HEK293 (cell line): ENCODE measurements at regions of chr11 and their contacts with region 1.

Region 1: DNA sequence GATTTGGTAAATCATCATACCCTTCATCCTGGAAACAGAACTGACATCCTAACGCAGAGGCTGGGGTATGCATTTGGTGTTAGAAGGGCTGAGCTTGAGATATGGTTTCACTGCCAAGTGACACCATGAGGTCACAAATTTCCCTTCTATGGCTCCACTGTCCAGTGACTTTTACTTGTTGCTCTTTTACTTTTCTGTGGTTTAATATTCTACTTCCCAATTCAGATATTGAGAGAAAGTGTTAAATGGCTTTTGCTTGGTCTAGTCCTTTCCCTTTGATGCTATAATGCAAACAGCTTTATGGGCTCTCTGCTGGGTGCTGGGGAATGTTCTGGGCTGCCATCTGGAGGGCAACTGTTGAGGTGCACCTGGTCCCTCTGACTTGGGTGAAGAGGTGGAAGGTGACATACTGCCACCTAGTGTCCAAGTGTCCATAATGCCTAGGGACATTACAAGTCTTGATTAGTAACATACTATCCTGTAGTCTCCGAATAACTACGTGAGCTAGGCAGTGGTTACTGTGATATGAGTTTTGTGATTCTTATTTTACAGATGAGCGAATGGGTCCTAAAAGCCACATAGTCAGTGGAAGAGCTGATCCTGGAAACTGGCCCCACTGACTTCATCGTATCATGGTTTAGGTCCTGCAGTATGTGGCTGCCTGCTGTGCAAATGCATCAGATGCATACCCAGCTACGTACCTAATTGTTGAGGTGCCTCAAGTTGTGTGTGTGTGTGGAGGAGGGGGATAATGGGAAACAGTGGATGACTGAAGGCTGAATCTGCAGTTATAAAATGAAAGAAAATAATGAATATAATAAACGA is 149.1 kb upstream of the RAG2 start:
- H3K4me3 ChIP-seq: no peak overlapping the region
- H3K27ac ChIP-seq: no peak overlapping the region
- H3K4me1 ChIP-seq: no peaks in the 10 kb centered on the region
- CTCF ChIP-seq: peak; percentile 93

Region 2: GRCh38 chr11:36455658-36456111 is 291.4 kb before region 1 on chr11:
- CTCF ChIA-PET with region 1: no interaction called
- POLR2A ChIA-PET with region 1: no interaction called
- H3K4me3 ChIP-seq: no peak overlapping the region
- H3K27ac ChIP-seq: peak overlapping the region; percentile 74
- H3K4me1 ChIP-seq: peaks cover 5% of the 10 kb centered on the region; the same call in 1 of the 2 replicates
- CTCF ChIP-seq: no peak

Region 3: DNA sequence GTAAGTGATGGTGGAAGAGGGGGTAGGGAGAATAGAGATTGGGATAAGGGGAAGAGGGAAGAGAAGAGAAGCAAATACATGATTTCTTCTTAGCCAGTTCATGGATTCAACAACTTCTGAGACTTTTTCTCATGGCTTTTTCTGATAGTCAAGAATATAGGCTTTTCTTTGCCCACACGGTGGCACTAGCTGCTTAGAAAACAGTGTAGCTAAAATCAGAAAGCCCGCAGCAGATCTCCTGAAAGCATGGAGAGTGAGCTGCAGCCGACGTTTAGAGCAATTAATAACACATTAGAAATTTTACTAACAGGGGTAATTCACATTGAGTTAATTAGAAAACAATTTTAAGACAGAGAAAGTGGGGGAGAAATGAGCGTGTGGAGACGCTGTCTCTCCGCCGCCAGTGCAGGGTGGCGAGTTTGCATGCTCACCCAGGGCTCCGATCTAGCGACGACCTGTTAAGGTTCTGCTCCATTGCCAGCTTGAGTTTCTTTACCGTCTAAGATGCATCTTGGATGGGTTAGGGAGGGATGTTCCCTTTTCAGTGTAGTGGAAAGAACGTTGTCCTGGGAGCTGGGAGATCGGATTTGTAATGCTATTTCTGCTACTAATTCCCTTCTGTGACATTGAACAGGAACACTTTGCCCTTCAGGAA is 182.6 kb before region 1 on chr11:
- CTCF ChIA-PET with region 1: interaction called, 284 read pairs
- POLR2A ChIA-PET with region 1: no interaction called
- H3K4me3 ChIP-seq: peak overlapping the region; percentile 21; the same call in 1 of the 2 replicates
- H3K27ac ChIP-seq: no peak overlapping the region
- H3K4me1 ChIP-seq: no peaks in the 10 kb centered on the region
- CTCF ChIP-seq: peak; percentile 32

Region 4: GRCh38 chr11:36622431-36623136 is 124.5 kb before region 1 on chr11:
- CTCF ChIA-PET with region 1: interaction called, 15 read pairs
- POLR2A ChIA-PET with region 1: interaction called, 3 read pairs
- H3K4me3 ChIP-seq: no peak overlapping the region
- H3K27ac ChIP-seq: no peak overlapping the region
- H3K4me1 ChIP-seq: no peaks in the 10 kb centered on the region; the same call in 1 of the 2 replicates
- CTCF ChIP-seq: no peak

Region 5: GRCh38 chr11:36684840-36685801 is 62.0 kb before region 1 on chr11:
- CTCF ChIA-PET with region 1: interaction called, 48 read pairs
- POLR2A ChIA-PET with region 1: no interaction called
- H3K4me3 ChIP-seq: no peak overlapping the region
- H3K27ac ChIP-seq: no peak overlapping the region
- H3K4me1 ChIP-seq: no peaks in the 10 kb centered on the region
- CTCF ChIP-seq: no peak

Region 6: DNA sequence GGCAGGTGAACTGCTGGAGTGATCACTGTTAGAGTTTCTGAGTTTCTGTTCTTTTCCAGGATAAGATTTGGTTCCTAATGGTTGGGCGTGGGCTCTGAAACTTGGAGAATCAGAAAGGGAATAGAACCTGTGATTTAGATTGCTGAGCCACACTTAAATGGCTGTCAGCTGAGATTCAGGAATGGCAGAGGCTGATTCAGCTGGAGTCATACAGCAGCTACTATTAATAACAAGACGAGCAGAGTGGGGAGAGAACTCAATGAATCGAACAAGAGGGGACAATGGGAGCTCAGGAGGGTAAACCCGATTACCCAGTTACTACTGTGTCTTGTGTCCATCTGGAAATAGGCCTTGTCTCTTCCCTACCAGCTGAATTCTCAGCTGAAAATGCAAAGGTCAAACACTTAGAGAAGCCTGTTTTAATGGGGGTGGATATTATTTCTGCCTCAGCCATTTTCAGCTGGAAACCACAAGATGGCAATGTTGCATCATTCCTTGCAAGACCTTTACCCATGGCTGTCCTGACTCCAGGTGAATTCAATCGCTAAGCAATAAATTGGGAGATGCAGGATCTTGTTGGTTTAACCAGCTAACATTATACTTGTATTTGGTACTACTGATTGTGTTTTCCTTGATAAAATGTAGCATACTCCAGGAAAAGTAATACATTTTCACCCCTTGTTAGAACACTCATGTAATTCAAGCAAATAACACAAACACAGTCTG is 44.6 kb before region 1 on chr11:
- CTCF ChIA-PET with region 1: interaction called, 261 read pairs
- POLR2A ChIA-PET with region 1: no interaction called
- H3K4me3 ChIP-seq: no peak overlapping the region
- H3K27ac ChIP-seq: no peak overlapping the region
- H3K4me1 ChIP-seq: no peaks in the 10 kb centered on the region
- CTCF ChIP-seq: peak; percentile 72; the same call in 1 of the 2 replicates

Region 7: GRCh38 chr11:36724742-36725385 is 22.2 kb before region 1 on chr11:
- CTCF ChIA-PET with region 1: interaction called, 144 read pairs
- POLR2A ChIA-PET with region 1: no interaction called
- H3K4me3 ChIP-seq: no peak overlapping the region
- H3K27ac ChIP-seq: no peak overlapping the region
- H3K4me1 ChIP-seq: no peaks in the 10 kb centered on the region
- CTCF ChIP-seq: no peak

Region 8: DNA sequence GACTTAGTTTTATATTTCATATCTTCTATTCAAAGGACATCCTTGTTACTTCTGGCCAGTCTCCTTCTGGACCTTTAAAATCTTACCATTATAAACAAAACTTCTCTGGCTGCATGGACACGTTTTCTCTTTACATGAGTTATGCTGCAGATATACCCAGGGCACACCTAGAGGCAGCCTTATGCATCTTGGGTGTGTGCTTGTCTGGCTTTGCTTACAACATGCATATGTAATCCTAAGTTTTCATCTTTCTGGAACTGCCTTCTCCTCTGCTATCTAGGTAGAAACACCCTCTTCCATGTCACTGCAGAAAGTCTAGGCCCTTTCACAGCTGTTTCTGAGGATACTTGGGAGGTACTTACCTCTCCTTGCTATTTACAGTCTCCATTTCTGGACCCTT is 36.7 kb after region 1 on chr11:
- CTCF ChIA-PET with region 1: interaction called, 21 read pairs
- POLR2A ChIA-PET with region 1: no interaction called
- H3K4me3 ChIP-seq: no peak overlapping the region
- H3K27ac ChIP-seq: no peak overlapping the region
- H3K4me1 ChIP-seq: no peaks in the 10 kb centered on the region
- CTCF ChIP-seq: no peak

Region 9: DNA sequence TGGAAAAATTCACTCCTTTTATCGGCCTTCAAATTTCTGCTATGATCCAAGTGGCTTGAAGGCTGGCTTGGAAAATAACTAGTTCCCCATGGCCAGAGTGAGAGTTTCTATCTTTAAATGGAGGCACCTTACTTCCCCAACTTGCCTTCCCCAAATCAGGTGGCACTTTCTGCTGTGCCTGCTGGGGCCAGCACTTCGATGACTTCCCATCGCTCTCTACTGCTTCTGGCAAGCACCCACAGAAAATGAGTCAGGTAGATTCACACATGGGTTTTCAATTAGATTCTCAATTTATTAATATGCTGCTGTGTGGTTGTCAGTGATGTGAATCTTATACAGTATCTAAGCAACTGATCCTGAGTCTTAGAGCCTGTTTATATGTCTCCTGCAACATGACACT is 249.7 kb after region 1 on chr11:
- CTCF ChIA-PET with region 1: no interaction called
- POLR2A ChIA-PET with region 1: no interaction called
- H3K4me3 ChIP-seq: no peak overlapping the region
- H3K27ac ChIP-seq: no peak overlapping the region
- H3K4me1 ChIP-seq: no peaks in the 10 kb centered on the region
- CTCF ChIP-seq: no peak